AG04449 (cell line): ENCODE measurements at regions of chr7 and their contacts with region 1.

Region 1: DNA sequence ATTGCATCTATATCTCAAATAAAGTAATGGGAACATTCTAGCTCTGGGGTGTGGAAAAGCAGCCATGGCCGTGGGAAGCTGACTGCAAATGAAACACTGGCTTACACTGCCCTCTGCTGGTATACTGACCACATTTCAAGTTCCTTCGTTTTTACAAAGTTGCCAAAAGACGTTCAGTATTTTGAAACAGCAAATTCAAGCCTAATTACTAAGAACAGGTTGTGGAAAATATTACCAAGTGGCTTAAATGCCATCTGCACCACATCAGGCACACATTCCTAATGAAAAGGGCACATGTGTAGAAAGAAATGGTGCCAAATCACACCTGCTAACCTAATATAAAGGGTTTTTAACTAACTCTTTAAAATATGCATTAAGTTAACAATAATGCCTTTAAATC is 83.9 kb downstream of the JAZF1 start:
- DNase-seq: no peak
- H3K4me3 ChIP-seq: no peak overlapping the region
- CTCF ChIP-seq: peak; percentile 76

Region 2: GRCh38 chr7:27745064-27745583 is 351.6 kb before region 1 on chr7:
- CTCF ChIA-PET with region 1: interaction called, 25 read pairs
- POLR2A ChIA-PET with region 1: no interaction called
- DNase-seq: no peak
- H3K4me3 ChIP-seq: no peak overlapping the region
- CTCF ChIP-seq: peak; percentile 62

Region 3: DNA sequence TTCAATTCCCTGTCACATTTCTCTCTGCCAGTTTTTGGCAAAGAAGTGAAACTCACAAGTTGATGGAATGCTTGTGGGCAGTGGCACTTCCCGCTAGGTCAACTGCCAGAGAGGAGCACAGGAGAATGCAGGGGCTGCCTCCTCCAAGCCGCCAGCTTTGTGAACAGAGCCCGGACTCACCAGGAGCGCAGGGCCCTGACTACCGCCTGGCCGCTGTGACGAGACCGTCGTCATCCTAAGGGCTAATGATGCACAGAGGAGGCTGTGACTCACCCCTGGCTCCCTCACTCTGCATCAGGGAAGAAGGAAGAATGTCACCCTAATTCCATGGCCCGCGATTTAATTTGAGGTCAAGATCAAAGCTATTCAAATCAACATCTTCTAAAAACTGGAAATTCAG is 232.8 kb before region 1 on chr7:
- CTCF ChIA-PET with region 1: no interaction called
- POLR2A ChIA-PET with region 1: no interaction called
- DNase-seq: no peak
- H3K4me3 ChIP-seq: no peak overlapping the region
- CTCF ChIP-seq: no peak

Region 4: DNA sequence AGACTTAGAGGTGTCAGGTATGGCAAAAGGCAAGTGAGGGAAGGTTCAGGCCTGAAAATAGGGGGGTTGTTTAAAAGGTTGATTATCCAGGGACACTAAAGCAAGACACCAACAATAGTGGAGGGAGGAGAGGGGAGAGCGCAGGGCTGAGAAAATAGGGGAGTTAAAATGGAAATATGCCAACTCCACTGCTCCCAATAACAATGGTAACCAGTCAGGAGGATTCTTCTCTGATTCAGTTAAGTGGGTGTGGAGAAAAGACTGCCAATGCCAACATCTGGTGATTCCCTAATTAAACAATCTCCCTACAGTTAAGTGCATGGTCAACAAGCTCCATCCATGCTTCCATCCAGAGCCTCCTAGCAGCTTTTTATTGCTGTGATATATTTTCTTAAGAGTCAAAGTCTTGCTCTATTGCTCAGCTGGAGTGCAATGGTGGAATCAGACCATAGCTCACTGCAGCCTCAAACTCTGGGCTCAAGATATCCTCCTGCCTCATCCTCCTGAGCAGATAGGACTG is 99.5 kb before region 1 on chr7:
- CTCF ChIA-PET with region 1: no interaction called
- POLR2A ChIA-PET with region 1: no interaction called
- DNase-seq: no peak
- H3K4me3 ChIP-seq: no peak overlapping the region
- CTCF ChIP-seq: no peak

Region 5: DNA sequence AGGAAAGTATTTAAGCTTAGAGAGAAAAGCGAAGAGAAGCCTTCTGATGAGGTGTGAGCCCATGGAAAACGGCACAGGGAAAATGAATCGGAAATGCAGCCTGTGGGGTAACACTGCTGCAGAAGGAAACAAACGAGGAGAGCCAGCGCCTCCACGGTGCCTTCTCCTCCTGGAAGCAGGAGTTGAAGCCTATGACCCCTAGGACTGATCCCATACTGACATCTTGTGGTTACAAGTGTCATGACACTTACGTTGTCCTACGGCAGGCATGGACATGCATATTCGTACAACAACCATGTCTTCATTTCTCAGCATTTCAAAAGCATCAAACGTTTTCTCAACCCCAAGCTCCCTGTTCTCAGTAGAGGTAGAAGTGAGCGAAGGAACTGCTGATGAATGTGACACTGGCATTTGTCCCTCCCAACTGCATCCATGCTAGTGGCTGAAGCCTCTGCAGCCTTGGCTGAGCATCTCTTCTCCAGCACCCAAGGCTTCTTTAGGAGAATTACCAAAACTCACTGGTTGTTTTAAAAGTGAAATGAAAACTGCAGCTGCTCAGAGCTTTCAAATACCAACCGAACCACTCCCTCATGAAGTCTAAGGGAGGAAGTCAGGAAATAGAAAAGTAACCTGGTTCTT is 76.3 kb before region 1 on chr7:
- CTCF ChIA-PET with region 1: interaction called, 68 read pairs
- POLR2A ChIA-PET with region 1: no interaction called
- DNase-seq: no peak
- H3K4me3 ChIP-seq: no peak overlapping the region
- CTCF ChIP-seq: peak; percentile 80

Region 6: DNA sequence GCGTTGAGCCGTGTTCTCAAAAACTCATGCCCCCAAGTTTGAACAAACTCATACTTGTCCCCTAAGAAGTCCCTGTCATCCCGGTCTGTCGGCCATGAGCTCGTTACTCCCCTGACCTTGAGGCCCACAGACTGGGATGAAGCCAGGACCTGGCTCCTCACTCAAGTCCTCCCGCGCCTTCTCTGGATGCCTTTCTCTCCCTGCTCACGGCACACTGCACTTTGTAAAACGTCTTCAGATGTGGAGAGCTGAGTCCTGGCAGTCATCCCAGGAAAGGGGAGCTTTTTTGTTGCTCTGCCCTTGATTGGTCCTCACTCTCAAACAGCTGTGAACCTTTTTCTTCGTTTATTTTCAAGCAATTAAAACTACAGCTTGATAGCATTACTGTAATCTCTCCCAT is 26.9 kb before region 1 on chr7:
- CTCF ChIA-PET with region 1: interaction called, 217 read pairs
- POLR2A ChIA-PET with region 1: no interaction called
- DNase-seq: no peak
- H3K4me3 ChIP-seq: no peak overlapping the region
- CTCF ChIP-seq: no peak

Region 7: GRCh38 chr7:28112883-28113540 is 16.3 kb after region 1 on chr7:
- CTCF ChIA-PET with region 1: interaction called, 92 read pairs
- POLR2A ChIA-PET with region 1: no interaction called
- DNase-seq: no peak
- H3K4me3 ChIP-seq: no peak overlapping the region
- CTCF ChIP-seq: no peak

Region 8: DNA sequence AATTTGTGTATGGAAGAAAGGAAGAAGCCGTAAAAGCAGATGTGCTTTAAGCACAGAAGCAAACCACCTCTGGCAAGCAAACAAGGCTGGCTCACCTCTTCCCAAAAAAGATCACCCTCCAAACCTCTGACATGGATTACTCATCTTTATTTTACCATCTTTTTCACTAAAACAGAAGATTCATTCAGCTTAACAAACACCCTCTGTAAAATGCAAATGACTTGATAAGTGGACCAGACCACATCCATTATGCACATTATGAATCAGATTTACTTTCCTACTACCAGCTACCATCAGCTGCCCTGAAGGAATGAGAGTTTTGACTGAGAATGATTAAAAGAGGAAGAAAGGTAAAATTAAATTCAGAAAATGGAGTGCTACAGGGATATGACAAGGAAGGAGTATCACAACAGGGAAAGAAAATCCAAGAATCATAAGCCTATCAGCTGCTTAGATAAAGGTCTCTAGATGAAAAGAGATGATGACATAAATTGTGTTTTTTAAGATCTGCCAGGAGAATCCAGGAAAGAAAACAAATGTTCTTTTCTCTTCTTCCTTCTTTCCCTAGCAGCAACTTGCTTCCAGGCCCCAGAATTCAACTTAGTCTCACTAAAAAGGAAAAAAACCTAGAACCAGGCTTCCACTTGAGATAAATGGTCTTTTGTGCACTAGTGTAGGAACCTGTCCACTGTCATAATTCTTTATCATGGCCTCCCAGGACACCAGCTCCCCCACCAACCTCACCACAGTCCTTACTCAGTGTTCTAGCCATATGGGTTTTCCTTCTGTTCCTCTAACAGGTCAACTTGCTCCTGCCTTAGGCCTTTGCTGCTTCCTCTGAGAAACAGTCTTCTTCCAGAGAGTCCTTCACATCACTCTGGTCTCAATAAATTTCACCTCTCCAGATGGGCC is 36.5 kb after region 1 on chr7:
- CTCF ChIA-PET with region 1: interaction called, 11 read pairs
- POLR2A ChIA-PET with region 1: interaction called, 4 read pairs
- DNase-seq: no peak
- H3K4me3 ChIP-seq: no peak overlapping the region
- CTCF ChIP-seq: no peak

Region 9: DNA sequence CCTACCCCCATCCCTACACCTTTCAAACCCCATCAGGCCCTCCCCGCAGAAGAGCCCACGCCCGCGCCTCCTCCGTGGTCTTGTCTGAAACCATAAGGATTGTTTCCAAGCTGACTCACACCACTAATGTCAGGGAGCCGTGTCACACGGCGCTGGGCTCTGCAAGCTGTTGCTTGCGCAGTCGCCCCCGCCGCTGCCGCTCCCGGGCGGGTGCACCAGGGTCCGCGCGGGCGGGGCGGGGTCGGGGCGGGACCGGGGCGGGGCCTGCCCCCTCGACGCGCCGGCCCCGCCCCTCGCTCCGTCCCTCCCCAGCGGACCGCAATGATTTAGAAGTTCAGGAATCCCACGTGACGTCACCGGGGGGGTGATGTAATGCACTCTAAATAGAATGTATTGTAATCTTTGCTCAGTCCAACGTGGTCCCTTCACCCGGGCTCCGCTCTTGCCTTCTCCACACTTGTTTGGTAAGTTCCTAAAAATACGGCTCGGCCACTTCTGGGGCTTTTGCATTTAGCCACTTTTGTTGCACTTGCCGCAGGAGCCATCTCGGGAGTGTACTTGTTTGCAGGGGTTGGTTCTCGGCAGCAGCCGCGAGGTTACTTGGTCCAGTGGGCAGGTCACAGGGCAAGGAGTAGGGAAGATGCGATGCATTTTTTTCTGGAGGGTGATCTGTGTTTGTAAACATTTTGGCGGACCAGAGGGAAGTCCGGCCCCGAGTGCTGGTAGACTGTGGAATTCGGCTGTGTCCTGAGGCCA is 312.4 kb after region 1 on chr7:
- CTCF ChIA-PET with region 1: no interaction called
- POLR2A ChIA-PET with region 1: no interaction called
- DNase-seq: peak; percentile 74
- H3K4me3 ChIP-seq: peak overlapping the region; percentile 67
- CTCF ChIP-seq: no peak